ENCODE measurements at regions of chr3 and their contacts with region 1.

Region 1: DNA sequence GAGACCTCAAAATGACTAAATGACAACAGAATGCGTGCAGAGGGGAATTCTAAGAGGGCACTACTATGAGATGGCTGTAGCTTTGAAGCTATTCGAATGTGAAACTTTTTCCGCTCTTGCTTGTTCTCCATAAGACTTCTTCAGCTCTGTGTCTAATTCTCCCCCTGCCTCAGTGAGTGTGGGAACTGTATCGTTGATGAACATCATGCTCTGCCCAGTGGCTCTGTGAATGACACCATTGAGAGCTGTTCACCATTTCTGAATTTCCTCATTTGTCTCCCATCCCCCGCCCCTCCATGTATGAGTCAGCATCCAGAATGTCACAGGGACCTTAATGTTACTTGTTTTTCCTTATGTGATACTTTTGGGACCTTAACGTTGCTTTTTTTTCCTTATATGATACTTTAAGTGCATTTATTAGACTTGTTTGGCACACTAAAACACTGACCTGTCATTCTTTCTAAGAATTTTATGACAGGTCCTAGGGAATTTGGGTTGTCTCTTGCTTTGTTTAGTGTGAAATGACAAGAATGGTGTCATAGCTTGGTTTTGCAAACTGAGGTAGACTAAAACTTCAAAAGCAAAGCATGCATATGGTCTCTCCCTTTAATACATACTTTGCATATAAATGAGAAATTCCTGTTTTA is 99.5 kb downstream of the FNDC3B start:
- DNase-seq: no peak
- H3K4me3 ChIP-seq: no peak overlapping the region
- H3K27ac ChIP-seq: peak overlapping the region; percentile 20 to 36
- H3K4me1 ChIP-seq: peaks cover 13% of the 10 kb centered on the region
- H3K27me3 ChIP-seq: no peaks in the 10 kb centered on the region
- CTCF ChIP-seq: no peak
- POLR2A ChIP-seq: no peak

Region 2: GRCh38 chr3:171574556-171575240 is 564.2 kb before region 1 on chr3:
- intact Hi-C with region 1: no loop called
- DNase-seq: no peak
- H3K4me3 ChIP-seq: no peak overlapping the region
- H3K27ac ChIP-seq: no peak overlapping the region
- H3K4me1 ChIP-seq: no peaks in the 10 kb centered on the region
- H3K27me3 ChIP-seq: no peaks in the 10 kb centered on the region
- CTCF ChIP-seq: no peak
- POLR2A ChIP-seq: no peak

Region 3: GRCh38 chr3:172201136-172201869 is 62.4 kb after region 1 on chr3:
- intact Hi-C with region 1: loop called (anchors 5 kb)
- DNase-seq: peak; percentile 24
- H3K4me3 ChIP-seq: no peak overlapping the region
- H3K27ac ChIP-seq: no peak overlapping the region
- H3K4me1 ChIP-seq: peaks cover 25% of the 10 kb centered on the region
- H3K27me3 ChIP-seq: no peaks in the 10 kb centered on the region
- CTCF ChIP-seq: no peak
- POLR2A ChIP-seq: no peak

Region 4: GRCh38 chr3:172256101-172256734 is 117.3 kb after region 1 on chr3:
- intact Hi-C with region 1: loop called (anchors 5 kb)
- DNase-seq: no peak
- H3K4me3 ChIP-seq: no peak overlapping the region
- H3K27ac ChIP-seq: peak overlapping the region; percentile 29 to 57
- H3K4me1 ChIP-seq: no peaks in the 10 kb centered on the region
- H3K27me3 ChIP-seq: no peaks in the 10 kb centered on the region
- CTCF ChIP-seq: no peak
- POLR2A ChIP-seq: no peak

Measured in prostate gland (tissue), 2 donors.